Natural killer cell (primary cell): ENCODE measurements at regions of chrX and their contacts with region 1.

Region 1: DNA sequence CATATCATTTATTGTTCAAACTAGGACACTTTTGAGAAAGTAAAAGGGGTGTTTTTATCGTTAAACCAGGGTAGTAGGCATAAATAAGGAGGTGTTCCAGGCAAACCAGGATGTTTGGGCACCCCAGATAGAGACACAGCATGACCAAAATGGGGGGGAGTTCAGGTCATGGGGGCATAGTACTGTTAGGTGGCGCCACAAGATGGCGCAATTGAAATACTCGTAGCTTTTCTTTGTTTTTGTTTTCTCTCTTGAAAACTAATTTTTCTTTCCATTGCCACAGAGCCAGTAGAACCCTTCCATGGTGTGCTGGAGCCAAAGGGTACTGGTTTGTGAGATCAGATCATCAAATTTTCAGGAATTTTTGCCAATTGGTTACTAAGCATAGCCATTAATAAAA is 283.4 kb downstream of the BCOR start:
- DNase-seq: peak; percentile 25 to 78
- ATAC-seq: peak; percentile 48 to 80 (median 76)
- H3K4me3 ChIP-seq: no peak overlapping the region
- H3K4me3 Mint-ChIP-seq: no peak overlapping the region
- H3K27ac ChIP-seq: no peak overlapping the region
- H3K27ac Mint-ChIP-seq: peak overlapping the region in 1 of 2 donors; percentile 54
- H3K4me1 ChIP-seq: peaks cover 4% of the 10 kb centered on the region
- H3K4me1 Mint-ChIP-seq: peaks cover 0 to 5% of the 10 kb centered on the region in 2 donors
- H3K27me3 ChIP-seq: no peaks in the 10 kb centered on the region
- H3K27me3 Mint-ChIP-seq: peaks cover 8 to 28% of the 10 kb centered on the region in 2 donors
- CTCF ChIP-seq: peak; percentile 47

Region 2: GRCh38 chrX:39688576-39689375 is 125.6 kb before region 1 on chrX:
- intact Hi-C with region 1: no loop called
- DNase-seq: peak in 1 of 2 donors; percentile 9
- ATAC-seq: no peak
- H3K4me3 ChIP-seq: no peak overlapping the region
- H3K4me3 Mint-ChIP-seq: no peak overlapping the region
- H3K27ac ChIP-seq: no peak overlapping the region
- H3K27ac Mint-ChIP-seq: no peak overlapping the region
- H3K4me1 ChIP-seq: peaks cover 3% of the 10 kb centered on the region
- H3K4me1 Mint-ChIP-seq: no peaks in the 10 kb centered on the region
- H3K27me3 ChIP-seq: peaks cover 3% of the 10 kb centered on the region
- H3K27me3 Mint-ChIP-seq: peaks cover 21 to 40% of the 10 kb centered on the region in 2 donors
- CTCF ChIP-seq: no peak

Region 3: DNA sequence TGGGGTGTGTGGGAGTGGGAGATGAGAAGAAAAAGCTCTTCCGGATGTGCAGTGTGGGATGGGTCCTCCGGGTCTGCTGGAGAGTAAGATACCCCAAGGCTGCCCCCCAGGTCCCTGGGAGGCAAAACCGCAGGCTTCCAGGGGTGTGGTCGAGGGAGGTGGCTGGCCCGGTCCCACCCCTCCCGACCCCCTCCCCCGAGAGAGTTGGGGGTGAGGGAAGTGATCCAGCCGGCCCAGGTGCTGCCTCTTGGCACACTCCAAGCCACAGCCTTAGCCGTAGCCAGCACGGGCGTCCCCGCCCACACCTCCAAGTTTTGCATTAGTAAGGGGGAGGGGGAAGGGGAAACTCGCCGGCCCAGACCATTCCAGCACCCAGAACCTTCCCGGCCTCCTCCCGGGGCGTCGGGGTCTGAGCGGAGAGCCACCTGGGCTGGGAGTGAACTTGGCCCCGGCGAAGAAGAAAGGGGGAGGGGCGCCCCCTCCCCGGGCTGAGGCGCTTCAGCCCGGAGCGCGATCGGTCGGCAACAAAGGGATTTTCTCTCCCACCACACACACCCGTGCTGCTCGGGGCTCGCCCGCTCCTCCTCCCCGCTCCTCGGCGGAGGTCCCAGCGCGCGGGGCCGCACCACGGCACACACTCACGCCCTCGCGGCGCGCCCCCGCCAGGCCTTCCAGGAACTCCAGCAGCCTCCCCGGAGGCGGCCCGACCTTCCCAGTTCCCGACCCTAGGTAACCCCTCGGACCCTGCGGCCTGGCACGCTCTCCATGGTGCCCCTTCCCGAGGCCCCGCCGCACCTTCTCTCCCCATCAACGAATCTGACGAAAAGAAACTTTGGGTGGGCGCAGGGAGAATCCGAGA is 269.0 kb after region 1 on chrX:
- intact Hi-C with region 1: loop called (anchors 10 kb)
- DNase-seq: peak in 1 of 2 donors; percentile 34
- ATAC-seq: peak in 2 of 3 donors; percentile 57 to 72
- H3K4me3 ChIP-seq: peak overlapping the region; percentile 25
- H3K4me3 Mint-ChIP-seq: peak overlapping the region; percentile 73
- H3K27ac ChIP-seq: no peak overlapping the region
- H3K27ac Mint-ChIP-seq: peak overlapping the region in 1 of 2 donors; percentile 69
- H3K4me1 ChIP-seq: peaks cover 45% of the 10 kb centered on the region
- H3K4me1 Mint-ChIP-seq: peaks cover 19 to 22% of the 10 kb centered on the region in 2 donors
- H3K27me3 ChIP-seq: no peaks in the 10 kb centered on the region
- H3K27me3 Mint-ChIP-seq: peaks cover 4 to 22% of the 10 kb centered on the region in 2 donors
- CTCF ChIP-seq: no peak

Region 4: DNA sequence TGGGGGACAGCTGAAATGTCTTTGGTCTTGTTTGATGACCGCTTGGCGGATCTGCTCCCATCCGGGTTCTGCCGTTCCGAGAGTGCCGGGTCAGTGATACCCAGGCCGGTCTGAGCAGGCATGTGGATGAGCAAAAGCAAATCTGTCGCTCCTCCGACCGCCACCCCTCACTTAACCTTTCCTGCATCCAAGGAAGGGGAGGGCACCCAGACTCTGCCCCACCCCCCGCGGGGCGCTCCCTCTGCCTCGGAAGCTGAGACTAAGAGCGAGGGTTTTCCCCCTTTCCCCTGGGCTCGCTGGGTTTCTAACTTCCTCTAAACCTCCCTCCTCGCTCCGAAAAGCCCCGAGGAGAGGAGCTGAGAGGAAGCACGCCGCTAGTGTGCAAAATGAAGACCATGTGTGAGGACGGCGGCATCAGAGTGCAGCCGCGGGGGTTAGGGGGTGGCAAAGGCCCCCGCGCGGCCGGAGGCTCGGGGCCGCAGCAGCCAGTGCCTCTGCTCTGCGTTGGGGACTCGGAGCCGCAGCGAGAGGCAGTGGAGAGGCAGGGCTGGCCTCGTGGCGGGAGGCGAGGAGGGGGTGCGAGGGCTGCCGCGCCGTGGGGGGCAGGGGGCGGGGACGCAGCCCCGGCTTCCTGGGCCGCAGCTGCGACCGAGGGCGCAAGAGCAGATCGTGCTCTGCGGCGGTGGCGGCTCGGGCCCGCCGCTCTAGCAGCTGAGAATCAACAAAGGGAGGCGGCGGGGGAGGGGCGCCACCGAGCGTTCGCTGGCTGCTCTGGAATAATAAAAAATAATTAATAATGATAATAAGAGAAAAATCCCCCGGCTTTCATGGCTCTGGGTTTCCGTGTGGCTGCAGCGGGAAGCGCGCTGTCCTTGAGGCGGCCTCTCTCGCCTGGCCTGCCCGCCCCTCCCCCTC is 339.2 kb after region 1 on chrX:
- intact Hi-C with region 1: loop called (anchors 5 kb)
- DNase-seq: peak in 1 of 2 donors; percentile 84
- ATAC-seq: peak; percentile 52 to 62 (median 57)
- H3K4me3 ChIP-seq: peak overlapping the region; percentile 37
- H3K4me3 Mint-ChIP-seq: peak overlapping the region; percentile 85
- H3K27ac ChIP-seq: no peak overlapping the region
- H3K27ac Mint-ChIP-seq: peak overlapping the region in 1 of 2 donors; percentile 63
- H3K4me1 ChIP-seq: peaks cover 62% of the 10 kb centered on the region
- H3K4me1 Mint-ChIP-seq: peaks cover 8 to 17% of the 10 kb centered on the region in 2 donors
- H3K27me3 ChIP-seq: no peaks in the 10 kb centered on the region
- H3K27me3 Mint-ChIP-seq: peaks cover 6 to 19% of the 10 kb centered on the region in 2 donors
- CTCF ChIP-seq: no peak

Region 5: GRCh38 chrX:40266490-40267333 is 452.3 kb after region 1 on chrX:
- intact Hi-C with region 1: loop called (anchors 5 kb)
- DNase-seq: peak; percentile 26 to 74
- ATAC-seq: peak; percentile 66 to 84 (median 83)
- H3K4me3 ChIP-seq: peak overlapping the region; percentile 52
- H3K4me3 Mint-ChIP-seq: peak overlapping the region; percentile 72
- H3K27ac ChIP-seq: no peak overlapping the region
- H3K27ac Mint-ChIP-seq: no peak overlapping the region
- H3K4me1 ChIP-seq: peaks cover 18% of the 10 kb centered on the region
- H3K4me1 Mint-ChIP-seq: peaks cover 0 to 10% of the 10 kb centered on the region in 2 donors
- H3K27me3 ChIP-seq: no peaks in the 10 kb centered on the region
- H3K27me3 Mint-ChIP-seq: no peaks in the 10 kb centered on the region
- CTCF ChIP-seq: peak; percentile 52

Region 6: DNA sequence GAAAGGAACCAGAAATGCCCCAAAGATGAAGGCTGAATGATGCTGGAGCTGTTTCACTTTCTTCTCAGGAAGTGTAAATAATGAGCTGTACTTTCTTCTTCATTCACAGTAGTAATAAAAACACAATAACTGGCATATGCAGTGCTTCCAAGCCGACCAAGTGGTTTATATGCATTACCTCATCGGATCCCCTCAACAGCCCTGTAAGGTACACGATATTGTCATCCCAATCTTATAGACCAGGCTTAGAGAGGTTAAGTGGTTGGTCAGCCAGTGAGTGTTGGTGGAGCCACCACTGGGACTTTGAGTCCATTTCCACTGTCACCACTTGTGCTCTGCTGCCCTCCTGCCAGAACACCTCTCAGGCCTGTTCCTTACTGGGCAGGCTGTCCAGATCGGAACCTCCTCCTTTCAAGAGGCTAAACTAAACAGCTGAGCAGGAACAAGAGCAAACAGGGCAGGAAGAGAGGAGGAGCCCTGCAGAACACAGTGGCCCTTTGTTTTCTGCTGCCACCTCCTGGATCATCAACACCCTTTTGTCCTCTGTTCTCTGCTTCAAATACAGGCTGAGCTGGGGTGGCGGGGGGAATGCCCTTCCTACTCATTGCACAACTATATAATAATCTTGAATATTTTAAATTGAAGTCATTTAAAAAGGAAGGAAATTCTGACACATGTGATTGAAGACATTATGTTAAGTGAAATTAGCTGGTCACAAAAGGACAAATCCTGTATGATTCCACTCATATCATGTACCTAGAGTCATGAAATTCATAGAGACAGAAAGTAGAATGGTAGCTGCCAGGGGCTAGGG is 653.8 kb after region 1 on chrX:
- intact Hi-C with region 1: loop called (anchors 10 kb)
- DNase-seq: peak in 1 of 2 donors; percentile 58
- ATAC-seq: peak in 1 of 3 donors; percentile 63
- H3K4me3 ChIP-seq: no peak overlapping the region
- H3K4me3 Mint-ChIP-seq: no peak overlapping the region
- H3K27ac ChIP-seq: no peak overlapping the region
- H3K27ac Mint-ChIP-seq: no peak overlapping the region
- H3K4me1 ChIP-seq: peaks cover 12% of the 10 kb centered on the region
- H3K4me1 Mint-ChIP-seq: peaks cover 0 to 15% of the 10 kb centered on the region in 2 donors
- H3K27me3 ChIP-seq: no peaks in the 10 kb centered on the region
- H3K27me3 Mint-ChIP-seq: peaks cover 14 to 30% of the 10 kb centered on the region in 2 donors
- CTCF ChIP-seq: no peak